Activated T-helper 1 cell treated with anti-CD3 and anti-CD28 coated beads, Interleukin-12 subunit alpha, Interleukin-12 subunit beta, Interleukin-2, Interleukin-4 antibody, amounts not matched to agents 30 ng/mL and 10 ng/mL and 1 ng/mL, durations not matched to agents 14 hours and 24 hours and 36 hours (primary cell): ENCODE measurements at regions of chr4 and their contacts with region 1.

Region 1: DNA sequence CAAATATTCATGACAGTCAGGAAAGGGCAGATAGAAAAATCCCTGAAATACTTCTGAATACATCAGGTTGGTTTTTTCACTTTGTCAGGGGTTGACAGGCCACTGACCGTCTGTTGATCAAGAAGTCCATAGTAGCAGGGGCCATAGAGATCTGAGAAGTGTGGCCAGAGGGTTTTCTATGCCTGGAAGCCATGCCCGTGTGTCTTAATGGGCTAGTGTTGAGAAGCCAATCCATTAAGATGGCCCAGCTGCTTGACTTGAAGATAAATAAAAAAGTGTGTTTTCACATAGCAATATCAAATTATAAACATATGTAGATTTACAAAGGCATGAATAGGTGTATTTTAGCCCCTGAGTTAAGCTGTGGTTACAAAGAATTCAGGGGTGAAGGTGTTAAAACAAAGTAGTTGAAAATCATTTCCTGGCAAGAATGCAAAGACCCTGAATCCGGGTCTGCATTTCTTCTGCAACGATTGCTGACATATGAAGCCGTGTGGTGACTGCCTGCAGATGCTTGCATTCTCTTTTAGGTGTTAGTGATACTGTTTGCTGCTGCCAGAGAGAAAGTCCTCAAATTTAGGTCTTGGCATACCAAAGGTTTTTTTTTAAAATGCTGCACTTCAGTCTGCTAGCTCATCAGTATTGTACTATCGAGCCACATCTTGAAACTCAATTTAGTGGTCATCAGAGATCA is 9.3 kb upstream of the LIMCH1 start:
- DNase-seq: no peak
- H3K4me3 Mint-ChIP-seq: no peak overlapping the region
- H3K27ac Mint-ChIP-seq: no peak overlapping the region
- H3K4me1 Mint-ChIP-seq: no peaks in the 10 kb centered on the region
- H3K27me3 Mint-ChIP-seq: no peaks in the 10 kb centered on the region

Region 2: DNA sequence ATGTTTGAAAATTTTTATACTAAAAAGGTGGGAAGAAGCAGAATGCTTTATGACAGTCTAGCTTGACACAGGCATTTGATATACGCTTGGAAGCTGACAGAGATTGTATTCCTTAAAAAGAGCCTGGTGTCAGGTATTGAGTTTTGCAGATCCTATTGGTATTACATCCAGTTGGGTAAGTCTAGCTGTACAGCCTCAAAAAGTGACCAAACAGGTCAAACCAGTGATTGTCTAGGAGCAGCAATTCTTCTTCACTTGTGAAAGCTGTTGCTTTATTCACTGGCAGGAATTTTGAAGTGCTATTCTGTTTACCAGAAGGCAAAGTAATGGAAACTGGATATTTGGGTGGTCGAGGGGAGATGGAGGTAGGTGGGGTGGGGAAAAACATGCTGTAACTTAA is 194.5 kb before region 1 on chr4:
- intact Hi-C with region 1: no loop called
- DNase-seq: no peak
- H3K4me3 Mint-ChIP-seq: no peak overlapping the region
- H3K27ac Mint-ChIP-seq: no peak overlapping the region
- H3K4me1 Mint-ChIP-seq: no peaks in the 10 kb centered on the region
- H3K27me3 Mint-ChIP-seq: no peaks in the 10 kb centered on the region

Region 3: DNA sequence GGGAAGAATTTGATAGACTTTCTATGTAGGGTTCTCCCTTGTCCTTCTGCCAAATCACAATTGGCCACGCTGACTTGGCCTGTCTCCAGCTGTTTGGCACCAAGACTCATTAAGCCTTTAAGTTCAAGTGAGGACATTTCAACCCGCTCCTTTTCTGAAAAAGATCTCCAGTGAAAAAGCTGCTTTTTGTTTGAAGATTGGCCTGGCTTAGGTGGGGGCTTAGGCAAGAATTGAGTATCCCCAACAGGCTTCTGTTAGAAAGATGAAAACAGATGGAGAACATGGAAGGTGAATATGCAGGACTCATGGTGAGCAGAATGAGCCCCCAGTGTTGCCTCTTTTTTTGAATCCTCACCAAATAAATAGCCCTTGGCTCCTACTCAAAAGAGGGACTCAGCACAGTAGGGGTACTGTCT is 19.2 kb before region 1 on chr4:
- intact Hi-C with region 1: no loop called
- DNase-seq: no peak
- H3K4me3 Mint-ChIP-seq: no peak overlapping the region
- H3K27ac Mint-ChIP-seq: no peak overlapping the region
- H3K4me1 Mint-ChIP-seq: no peaks in the 10 kb centered on the region
- H3K27me3 Mint-ChIP-seq: no peaks in the 10 kb centered on the region

Region 4: GRCh38 chr4:41541687-41542094 is 13.0 kb after region 1 on chr4:
- intact Hi-C with region 1: no loop called
- DNase-seq: no peak
- H3K4me3 Mint-ChIP-seq: no peak overlapping the region
- H3K27ac Mint-ChIP-seq: no peak overlapping the region
- H3K4me1 Mint-ChIP-seq: no peaks in the 10 kb centered on the region
- H3K27me3 Mint-ChIP-seq: no peaks in the 10 kb centered on the region

Region 5: DNA sequence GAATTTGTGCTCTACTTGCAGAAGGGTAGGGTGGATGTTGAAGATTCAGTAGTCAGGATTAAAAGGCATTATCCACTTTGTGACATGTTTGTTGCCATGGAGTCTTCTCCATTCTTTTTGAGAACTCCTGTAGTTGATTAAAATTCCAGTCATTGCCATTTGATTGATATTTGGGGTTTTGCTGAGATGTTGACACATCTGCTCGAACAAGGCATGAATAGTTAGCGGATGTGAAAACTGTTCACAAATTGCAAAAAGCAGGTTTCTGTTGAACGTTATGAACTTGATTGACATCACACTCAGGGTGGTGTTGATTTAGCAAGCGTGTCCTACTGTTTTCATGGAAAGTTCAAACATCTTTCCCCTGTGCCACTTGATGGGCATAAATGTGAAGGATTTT is 26.2 kb after region 1 on chr4:
- intact Hi-C with region 1: loop called (anchors 1 kb)
- DNase-seq: no peak
- H3K4me3 Mint-ChIP-seq: no peak overlapping the region
- H3K27ac Mint-ChIP-seq: no peak overlapping the region
- H3K4me1 Mint-ChIP-seq: no peaks in the 10 kb centered on the region
- H3K27me3 Mint-ChIP-seq: no peaks in the 10 kb centered on the region